Motor neuron (in vitro differentiated cells): ENCODE measurements at regions of chr17 and their contacts with region 1.

Region 1: GRCh38 chr17:63425482-63425881 is 20.6 kb downstream of the CYB561 start:
- ATAC-seq: peak; percentile 86 to 98 (median 88)
- H3K4me3 ChIP-seq: no peak overlapping the region
- H3K27ac ChIP-seq: no peak overlapping the region
- H3K4me1 ChIP-seq: peaks cover 2 to 6% of the 10 kb centered on the region in 2 donors

Region 2: DNA sequence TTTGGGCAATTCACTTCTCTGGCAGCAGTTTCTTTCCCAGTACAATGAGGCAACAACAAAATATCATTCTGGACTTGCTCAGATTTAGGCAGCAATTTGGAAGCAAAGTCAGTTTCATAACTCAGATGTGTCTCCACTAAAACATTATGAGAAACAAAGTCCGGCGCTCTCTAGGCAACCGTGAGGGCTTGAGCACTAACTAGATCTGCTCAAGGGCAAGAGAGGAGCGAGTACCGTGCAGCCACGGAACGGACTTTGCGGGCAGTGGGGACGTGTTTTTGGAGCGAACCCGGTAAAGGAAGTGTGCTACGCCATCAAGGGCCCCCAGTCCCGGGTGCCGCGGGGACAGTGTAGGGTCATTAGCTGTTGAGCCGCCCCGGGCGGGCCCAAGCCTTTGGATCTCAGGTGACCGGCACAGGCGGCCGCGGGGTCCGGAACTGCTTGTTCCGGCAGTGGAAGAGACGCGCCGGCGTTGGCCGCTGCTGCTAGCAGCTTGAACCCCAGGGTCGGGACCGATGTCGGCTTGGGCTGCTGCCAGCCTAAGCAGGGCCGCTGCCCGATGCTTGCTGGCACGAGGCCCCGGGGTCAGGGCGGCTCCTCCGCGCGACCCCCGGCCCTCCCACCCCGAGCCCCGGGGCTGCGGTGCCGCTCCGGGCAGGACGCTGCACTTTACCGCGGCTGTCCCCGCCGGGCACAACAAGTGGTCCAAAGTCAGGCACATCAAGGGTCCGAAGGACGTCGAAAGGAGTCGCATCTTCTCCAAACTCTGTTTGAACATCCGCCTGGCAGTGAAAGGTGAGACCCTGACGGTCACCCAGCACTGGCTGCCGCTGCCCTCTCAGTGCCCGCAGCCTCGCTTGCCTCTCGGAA is 175.3 kb after region 1 on chr17 and contains the start of gene TACO1:
- in situ Hi-C with region 1: loop called in 6 of 9 experiments (anchors 10 to 25 kb)
- ATAC-seq: peak; percentile 96 to 99 (median 99)
- H3K4me3 ChIP-seq: peak within 1 kb of the TSS; percentile 87 to 100 (median 98)
- H3K27ac ChIP-seq: peak within 1 kb of the TSS in 1 of 2 donors; percentile 75
- H3K4me1 ChIP-seq: peaks cover 5 to 12% of the 10 kb centered on the region in 2 donors
- total RNA-seq, gene TACO1: 11.5 to 31.5 (median 22.4) TPM

Region 3: DNA sequence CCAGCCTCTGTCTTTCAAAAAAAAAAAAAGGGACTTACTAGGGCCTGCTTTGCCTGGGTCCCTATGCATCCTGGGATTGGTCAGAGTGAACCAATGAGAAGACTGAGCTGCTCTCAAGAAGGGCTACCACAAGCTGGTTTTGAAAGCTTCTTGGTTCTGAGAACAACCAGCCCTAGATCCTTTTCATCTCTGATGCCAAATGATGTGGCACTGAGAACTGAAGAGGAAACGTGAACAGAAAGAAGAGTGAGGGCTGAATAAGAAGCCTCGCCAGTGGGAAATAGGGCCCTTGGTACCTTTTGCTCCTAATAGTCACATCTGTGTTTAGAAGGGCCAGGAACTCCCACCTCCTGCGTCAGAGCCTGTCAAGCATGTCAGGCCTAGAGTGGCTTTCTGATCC is 185.9 kb after region 1 on chr17:
- in situ Hi-C with region 1: loop called in 7 of 9 experiments (anchors 10 to 25 kb)
- ATAC-seq: no peak
- H3K4me3 ChIP-seq: no peak overlapping the region
- H3K27ac ChIP-seq: no peak overlapping the region
- H3K4me1 ChIP-seq: no peaks in the 10 kb centered on the region